ENCODE measurements at regions of chr1 and their contacts with region 1.

Region 1: DNA sequence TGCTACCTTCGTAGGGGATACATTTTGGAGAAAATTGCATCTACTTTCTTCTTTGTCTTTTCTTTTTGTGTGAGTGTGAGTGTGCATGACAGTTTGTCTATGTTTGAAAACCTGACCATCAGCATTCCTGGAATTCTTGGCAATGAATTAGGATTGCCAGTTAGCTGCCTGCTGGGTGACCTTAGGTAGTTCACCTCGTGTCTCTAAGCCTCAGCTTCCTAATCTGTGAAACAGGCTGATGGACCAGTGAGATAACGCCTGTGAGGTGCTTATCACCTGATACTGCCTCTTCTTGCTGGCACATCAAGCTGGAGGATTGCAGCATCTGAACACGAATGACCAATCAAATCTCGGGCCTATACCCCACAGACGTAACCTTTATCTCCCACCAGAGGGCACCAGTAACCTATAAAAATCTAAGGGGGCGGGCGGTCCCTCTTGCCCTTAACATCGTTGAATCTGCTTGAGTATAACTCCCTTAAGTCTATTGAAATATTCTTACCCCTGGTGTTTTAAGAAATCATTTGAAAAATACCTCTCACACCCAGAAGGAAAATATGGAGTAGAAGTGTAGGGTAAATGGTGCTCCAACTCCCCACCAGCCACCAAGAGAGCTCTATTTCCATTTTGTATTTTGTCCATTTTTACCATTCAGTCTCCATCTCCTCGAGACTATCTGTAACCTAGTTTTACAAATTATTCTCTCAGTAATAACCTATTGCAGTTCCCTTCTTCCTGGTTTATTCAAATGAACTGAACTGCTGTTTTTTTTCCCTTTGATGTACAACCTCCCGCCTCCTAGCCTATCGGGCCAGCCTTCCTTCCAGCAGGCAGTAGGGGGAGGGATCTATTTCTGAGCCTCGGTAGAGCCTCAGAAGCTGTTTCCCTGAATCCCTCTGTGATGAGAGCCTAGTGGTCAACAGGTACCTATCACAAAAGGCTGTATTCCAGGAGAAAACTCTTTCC is 49.7 kb downstream of the MDM4 start:
- DNase-seq: peak; percentile 82
- H3K4me3 ChIP-seq: no peak overlapping the region
- H3K27ac ChIP-seq: no peak overlapping the region
- H3K4me1 ChIP-seq: no peaks in the 10 kb centered on the region
- H3K27me3 ChIP-seq: no peaks in the 10 kb centered on the region
- CTCF ChIP-seq: peak; percentile 80

Region 2: GRCh38 chr1:204623894-204624361 is 58.0 kb after region 1 on chr1:
- CTCF ChIA-PET with region 1: no interaction called
- POLR2A ChIA-PET with region 1: no interaction called
- intact Hi-C with region 1: no loop called
- DNase-seq: peak; percentile 29
- H3K4me3 ChIP-seq: no peak overlapping the region
- H3K27ac ChIP-seq: no peak overlapping the region
- H3K4me1 ChIP-seq: no peaks in the 10 kb centered on the region
- H3K27me3 ChIP-seq: no peaks in the 10 kb centered on the region
- CTCF ChIP-seq: 0 out of 2 replicates have a peak, but pooled peaks have one; percentile 19

Region 3: DNA sequence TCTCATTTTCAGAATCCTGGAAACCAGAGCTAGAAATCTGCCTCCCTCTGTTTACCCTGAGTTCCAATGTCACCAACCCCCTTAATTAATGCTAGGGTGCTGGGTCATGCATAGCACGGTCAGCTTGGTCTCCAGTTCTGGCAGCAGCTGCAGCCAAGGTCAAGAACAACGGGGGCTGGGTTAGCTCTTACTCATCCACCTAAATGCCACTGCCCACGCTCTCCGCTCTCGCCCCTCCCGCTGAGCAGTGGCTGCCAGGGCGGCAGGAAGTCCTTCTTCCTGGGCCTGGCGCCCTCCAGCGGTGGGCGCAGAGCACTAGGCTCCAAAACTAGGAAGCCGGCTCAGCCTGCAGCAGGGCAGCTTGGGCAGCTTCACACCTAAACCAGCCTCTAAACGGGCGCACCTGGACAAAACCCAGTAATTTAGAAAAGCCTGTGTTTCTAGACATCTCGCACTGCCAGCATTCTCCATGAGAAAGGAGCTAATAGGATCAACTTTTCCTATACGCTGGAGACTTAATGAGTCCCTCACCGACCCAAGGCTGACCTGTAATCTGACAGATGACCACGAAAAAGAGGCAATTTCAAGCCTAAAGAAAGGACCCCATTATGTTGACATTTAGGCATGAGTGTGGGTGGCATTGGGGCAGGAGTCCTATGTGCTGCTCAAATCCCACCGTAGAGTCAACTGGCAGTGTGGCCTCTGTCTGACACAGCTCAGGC is 198.0 kb after region 1 on chr1:
- CTCF ChIA-PET with region 1: interaction called, 9 read pairs
- POLR2A ChIA-PET with region 1: no interaction called
- intact Hi-C with region 1: loop called (anchors 2 kb)
- DNase-seq: peak; percentile 83
- H3K4me3 ChIP-seq: no peak overlapping the region
- H3K27ac ChIP-seq: no peak overlapping the region
- H3K4me1 ChIP-seq: no peaks in the 10 kb centered on the region
- H3K27me3 ChIP-seq: peaks cover 30% of the 10 kb centered on the region
- CTCF ChIP-seq: peak; percentile 97

Region 4: DNA sequence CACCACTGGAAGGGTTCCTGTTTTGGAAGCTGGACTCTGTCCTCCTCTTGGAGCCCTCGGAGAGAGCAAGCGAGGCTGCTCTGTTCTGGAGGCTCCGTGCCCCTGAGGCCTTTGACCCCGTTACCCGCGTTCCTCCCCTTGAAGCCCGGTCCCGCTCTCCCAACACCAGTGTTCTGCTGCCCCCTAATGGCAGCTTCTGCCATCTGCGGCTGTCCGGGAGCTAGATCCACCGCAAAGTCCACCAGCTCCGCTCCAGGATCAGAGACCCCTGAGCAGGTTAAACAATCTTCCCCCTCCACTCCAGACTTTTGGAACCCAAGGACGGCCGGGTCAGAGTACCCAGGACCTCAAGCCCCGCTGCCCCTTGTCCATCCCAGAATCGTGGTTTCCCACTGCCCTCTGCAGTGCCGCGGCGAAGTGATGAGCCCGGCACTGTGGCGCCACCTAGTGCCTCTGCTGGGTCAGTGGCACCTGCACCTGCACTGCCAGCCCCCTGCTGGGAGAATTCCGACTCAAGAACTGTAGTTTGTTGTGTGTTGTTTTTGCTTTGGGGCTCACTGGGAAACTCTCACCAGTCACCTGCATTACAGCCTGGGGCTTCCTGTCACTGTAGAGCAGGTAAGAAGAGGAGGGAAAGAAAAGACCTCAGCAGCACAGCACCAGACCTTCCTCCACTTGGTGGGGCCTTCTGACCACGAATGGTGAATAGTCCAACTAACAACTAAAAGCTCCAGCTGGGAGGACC is 241.2 kb after region 1 on chr1:
- CTCF ChIA-PET with region 1: interaction called, 43 read pairs
- POLR2A ChIA-PET with region 1: interaction called, 4 read pairs
- intact Hi-C with region 1: loop called (anchors 1 kb)
- DNase-seq: peak; percentile 86
- H3K4me3 ChIP-seq: peak overlapping the region; percentile 48
- H3K27ac ChIP-seq: no peak overlapping the region
- H3K4me1 ChIP-seq: no peaks in the 10 kb centered on the region
- H3K27me3 ChIP-seq: peaks cover 12% of the 10 kb centered on the region
- CTCF ChIP-seq: peak; percentile 100; the same call in 1 of the 2 replicates

Measured in A673 (cell line).